K562 (cell line): ENCODE measurements at regions of chr5 and their contacts with region 1.

Region 1: DNA sequence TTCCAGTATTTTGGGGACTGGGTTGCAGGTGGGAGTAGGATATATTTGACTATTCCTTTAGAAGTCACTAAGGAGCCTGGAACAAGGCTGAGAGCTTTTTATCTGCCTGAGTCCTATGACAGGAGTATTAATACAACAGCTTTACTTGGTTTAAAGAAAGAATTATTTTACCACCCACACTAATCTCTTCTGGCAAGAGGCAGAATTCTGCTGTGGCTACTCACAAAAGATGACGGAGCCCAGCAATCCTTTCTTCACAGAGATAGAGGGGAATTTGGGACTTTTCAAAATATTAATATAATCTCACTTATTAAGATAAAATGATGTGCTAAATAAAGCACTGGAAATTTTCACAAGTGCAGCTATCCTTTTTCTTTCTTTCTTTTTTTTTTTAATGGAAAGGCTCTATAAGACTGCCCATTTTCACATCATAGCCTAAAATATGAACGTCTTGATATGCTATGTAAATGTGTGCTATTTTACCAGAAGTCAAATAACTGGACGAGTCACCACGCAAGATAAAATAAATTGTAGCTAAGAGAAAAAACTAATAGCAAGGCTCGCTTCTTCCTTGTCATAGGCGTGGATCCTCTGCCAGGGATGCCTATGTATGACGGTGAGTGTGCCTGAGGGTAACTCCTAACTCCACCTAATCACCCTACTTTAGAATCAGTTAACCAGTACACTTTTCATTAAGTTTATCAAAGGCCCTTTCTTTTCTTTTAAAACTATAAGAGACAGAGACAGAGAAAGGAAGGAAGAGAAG is 76.3 kb downstream of the ZNF608 start:
- DNase-seq: no peak
- ATAC-seq: no peak; the same call in 2 of the 3 replicates
- H3K4me3 ChIP-seq: no peak overlapping the region
- H3K27ac ChIP-seq: no peak overlapping the region
- H3K4me1 ChIP-seq: peaks cover 2 to 9% of the 10 kb centered on the region in 2 experiments; a peak in 4 of 5 replicates
- H3K27me3 ChIP-seq: no peaks in the 10 kb centered on the region
- CTCF ChIP-seq: no peak
- EP300 ChIP-seq: no peak
- POLR2A ChIP-seq: no peak
- RAD21 ChIP-seq: no peak

Region 2: DNA sequence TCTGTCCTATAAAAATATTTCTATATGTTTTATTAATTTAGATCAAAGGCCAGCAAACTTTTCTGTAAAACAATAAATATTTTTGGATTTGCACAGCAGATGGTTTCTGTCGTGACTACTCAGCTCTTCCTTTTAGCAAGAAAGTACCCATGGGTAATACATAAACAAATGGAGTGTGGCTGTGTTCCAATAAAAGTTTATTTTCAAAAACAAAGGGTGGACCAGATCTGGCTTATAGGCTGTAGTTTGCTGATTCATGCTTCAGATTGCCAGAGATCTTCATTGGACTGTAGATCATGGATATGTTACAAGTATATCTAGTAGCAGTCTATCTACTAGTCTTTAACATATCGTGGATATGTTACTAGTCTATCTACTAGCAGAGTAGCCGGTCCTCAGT is 567.7 kb before region 1 on chr5:
- CTCF ChIA-PET with region 1: no interaction called
- POLR2A ChIA-PET with region 1: no interaction called
- in situ Hi-C with region 1: no loop called
- intact Hi-C with region 1: no loop called
- DNase-seq: no peak
- ATAC-seq: no peak
- H3K4me3 ChIP-seq: no peak overlapping the region
- H3K27ac ChIP-seq: no peak overlapping the region
- H3K4me1 ChIP-seq: no peaks in the 10 kb centered on the region
- H3K27me3 ChIP-seq: no peaks in the 10 kb centered on the region
- CTCF ChIP-seq: no peak
- EP300 ChIP-seq: no peak
- POLR2A ChIP-seq: no peak
- RAD21 ChIP-seq: no peak

Region 3: DNA sequence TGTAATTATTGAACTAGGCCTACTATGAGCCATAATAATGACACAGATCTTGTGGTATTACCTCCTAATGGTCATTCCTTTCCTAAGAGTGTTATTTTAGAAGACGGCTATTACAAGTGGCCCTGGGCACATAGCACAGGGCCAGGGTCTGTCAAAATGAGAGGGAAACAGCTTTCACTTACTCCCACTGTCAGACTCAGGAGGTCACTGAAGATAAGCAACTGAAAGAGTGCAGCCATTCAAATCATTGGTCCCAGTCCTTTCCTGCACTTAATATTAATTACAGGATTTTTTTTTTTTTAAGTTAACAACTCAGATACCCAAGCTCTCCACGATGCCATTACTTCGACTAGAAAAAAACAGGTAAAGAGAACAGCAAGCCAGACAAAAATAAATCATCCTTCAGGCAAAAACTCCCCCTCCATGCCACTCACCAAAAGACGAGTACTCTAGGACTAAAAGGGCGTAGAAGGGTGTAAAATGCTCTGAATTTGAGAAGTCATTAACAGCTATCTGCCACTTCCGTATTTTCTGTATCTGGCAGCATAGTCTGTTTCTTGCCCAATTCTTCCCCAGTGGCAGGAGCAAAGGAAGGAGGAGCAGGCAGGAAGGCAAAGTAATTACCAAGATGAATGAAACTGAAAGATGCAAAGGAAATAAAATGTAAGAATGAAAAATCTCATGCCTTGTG is 11.1 kb before region 1 on chr5:
- CTCF ChIA-PET with region 1: no interaction called
- POLR2A ChIA-PET with region 1: interaction called, 10 read pairs
- in situ Hi-C with region 1: no loop called
- intact Hi-C with region 1: no loop called
- DNase-seq: peak in 2 of 4 experiments; percentile 34 to 61
- ATAC-seq: peak; percentile 25; the same call in 2 of the 3 replicates
- H3K4me3 ChIP-seq: no peak overlapping the region
- H3K27ac ChIP-seq: peak overlapping the region; percentile 64
- H3K4me1 ChIP-seq: peaks cover 13 to 84% of the 10 kb centered on the region in 2 experiments; a peak in 4 of 5 replicates
- H3K27me3 ChIP-seq: no peaks in the 10 kb centered on the region
- CTCF ChIP-seq: no peak
- EP300 ChIP-seq: no peak
- POLR2A ChIP-seq: no peak
- RAD21 ChIP-seq: 0 out of 4 replicates have a peak, but pooled peaks of 1 of the 2 experiments have one; percentile 17